ENCODE measurements at regions of chr1 and their contacts with region 1.

Region 1: DNA sequence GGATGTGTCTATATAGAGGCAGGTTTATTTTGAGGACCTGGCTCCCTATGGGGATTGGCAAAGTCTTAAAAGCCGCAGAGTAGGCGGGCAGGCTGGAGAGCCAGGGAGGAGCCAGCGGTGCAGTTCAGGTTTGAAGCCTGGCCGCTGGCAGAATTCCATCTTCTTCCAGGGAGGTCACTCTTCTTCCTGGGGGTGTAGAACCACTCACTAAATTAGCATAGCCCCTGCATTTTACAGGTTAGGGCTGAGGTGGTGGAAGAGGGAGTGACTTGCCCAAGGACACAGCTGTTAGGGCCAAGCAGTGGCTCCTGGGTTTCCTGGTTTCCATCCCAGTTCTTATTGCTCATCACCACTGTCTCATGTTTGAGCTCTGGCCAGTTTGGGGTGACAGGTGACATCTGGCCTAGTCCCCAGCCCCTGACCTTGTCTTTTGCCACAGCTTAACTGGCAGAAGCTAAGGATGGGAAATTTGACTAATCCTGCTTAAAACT is 1.4 kb downstream of the PINK1 start:
- DNase-seq: peak; percentile 23
- CTCF ChIP-seq: no peak

Region 2: DNA sequence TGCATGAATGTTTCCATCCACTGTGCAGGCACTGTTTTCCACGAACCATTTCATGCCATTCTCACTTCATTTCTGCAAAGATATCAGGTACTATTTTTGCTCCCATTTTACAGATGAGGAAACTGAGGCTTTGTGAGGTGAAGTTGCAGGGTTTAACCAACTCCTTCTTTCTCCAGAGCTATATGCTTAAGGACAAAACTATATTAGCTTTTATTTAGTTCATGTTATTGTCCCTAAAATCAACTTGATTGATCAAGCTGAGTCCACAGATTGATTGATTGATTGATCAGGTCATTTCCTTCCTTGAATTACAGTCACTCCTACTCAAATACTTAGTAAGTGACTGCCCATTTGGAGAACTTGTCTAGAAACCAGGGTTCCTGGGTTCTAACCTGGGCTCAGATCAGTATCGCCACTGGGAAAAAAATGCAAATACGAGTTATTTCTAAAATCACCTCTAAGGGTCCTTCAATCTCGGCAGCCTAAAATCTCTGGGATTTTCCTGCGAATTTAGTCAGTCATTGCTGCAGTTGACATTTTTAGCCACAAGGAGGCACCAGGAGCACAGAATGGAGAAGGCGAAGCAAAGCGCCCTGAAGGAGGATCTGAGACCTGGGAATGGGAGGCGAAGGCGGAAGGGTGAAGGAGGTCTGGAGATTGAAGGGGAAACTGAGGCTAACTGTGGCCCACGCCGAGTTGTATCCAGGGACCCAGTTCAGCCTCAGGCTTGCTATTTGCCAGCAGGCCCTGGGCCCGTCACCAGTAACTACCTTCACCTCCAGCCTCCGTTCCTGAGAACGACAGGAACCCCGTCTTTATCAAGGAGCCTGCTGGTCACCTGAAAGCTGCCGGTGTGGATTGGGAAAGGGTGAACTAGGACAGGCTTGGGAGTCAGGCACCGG is 112.4 kb before region 1 on chr1:
- in situ Hi-C with region 1: loop called (anchors 5 kb)
- DNase-seq: peak; percentile 64
- CTCF ChIP-seq: peak; percentile 75